MCF 10A (cell line): ENCODE measurements at regions of chr6 and their contacts with region 1.

Region 1: GRCh38 chr6:138088330-138088766 is 18.9 kb downstream of the PERP start:
- DNase-seq: peak; percentile 92
- H3K4me3 Mint-ChIP-seq: peak overlapping the region; percentile 62
- H3K27ac Mint-ChIP-seq: peak overlapping the region; percentile 97
- H3K4me1 Mint-ChIP-seq: peaks cover 34% of the 10 kb centered on the region
- H3K27me3 Mint-ChIP-seq: no peaks in the 10 kb centered on the region
- CTCF ChIP-seq: no peak

Region 2: GRCh38 chr6:137832110-137832509 is 256.2 kb before region 1 on chr6:
- CTCF ChIA-PET with region 1: no interaction called
- POLR2A ChIA-PET with region 1: no interaction called
- intact Hi-C with region 1: no loop called
- DNase-seq: peak; percentile 76
- H3K4me3 Mint-ChIP-seq: peak overlapping the region; percentile 33
- H3K27ac Mint-ChIP-seq: peak overlapping the region; percentile 90
- H3K4me1 Mint-ChIP-seq: peaks cover 54% of the 10 kb centered on the region
- H3K27me3 Mint-ChIP-seq: no peaks in the 10 kb centered on the region
- CTCF ChIP-seq: no peak

Region 3: GRCh38 chr6:138001750-138002349 is 86.5 kb before region 1 on chr6:
- CTCF ChIA-PET with region 1: interaction called, 15 read pairs
- POLR2A ChIA-PET with region 1: interaction called, 61 read pairs
- intact Hi-C with region 1: no loop called
- DNase-seq: peak; percentile 65
- H3K4me3 Mint-ChIP-seq: no peak overlapping the region
- H3K27ac Mint-ChIP-seq: no peak overlapping the region
- H3K4me1 Mint-ChIP-seq: peaks cover 10% of the 10 kb centered on the region
- H3K27me3 Mint-ChIP-seq: no peaks in the 10 kb centered on the region
- CTCF ChIP-seq: peak; percentile 83

Region 4: DNA sequence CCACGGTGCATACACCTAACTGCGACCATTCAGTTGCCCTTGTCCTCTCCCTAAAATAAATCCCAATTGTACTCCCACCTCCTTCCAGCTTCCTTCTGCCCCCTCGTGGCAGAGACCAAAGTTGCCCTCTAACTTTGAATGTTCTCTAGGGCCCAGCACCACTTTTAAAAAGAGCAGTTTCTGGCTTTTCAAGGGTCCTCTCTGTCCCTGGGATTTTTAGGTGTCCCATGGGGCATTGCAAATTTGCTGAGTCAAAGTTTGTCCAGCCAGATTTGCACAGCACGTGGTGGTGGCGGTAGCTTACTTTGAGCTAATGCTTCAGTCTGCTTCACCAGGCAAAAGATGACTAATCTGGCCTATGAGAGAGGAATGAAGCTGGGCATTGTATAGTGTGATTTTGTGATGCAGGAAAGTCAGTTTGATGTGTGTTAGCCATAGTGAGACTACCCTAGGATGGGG is 81.3 kb before region 1 on chr6:
- CTCF ChIA-PET with region 1: interaction called, 15 read pairs
- POLR2A ChIA-PET with region 1: interaction called, 61 read pairs
- intact Hi-C with region 1: no loop called
- DNase-seq: peak; percentile 69
- H3K4me3 Mint-ChIP-seq: no peak overlapping the region
- H3K27ac Mint-ChIP-seq: peak overlapping the region; percentile 47
- H3K4me1 Mint-ChIP-seq: peaks cover 17% of the 10 kb centered on the region
- H3K27me3 Mint-ChIP-seq: no peaks in the 10 kb centered on the region
- CTCF ChIP-seq: peak; percentile 49

Region 5: DNA sequence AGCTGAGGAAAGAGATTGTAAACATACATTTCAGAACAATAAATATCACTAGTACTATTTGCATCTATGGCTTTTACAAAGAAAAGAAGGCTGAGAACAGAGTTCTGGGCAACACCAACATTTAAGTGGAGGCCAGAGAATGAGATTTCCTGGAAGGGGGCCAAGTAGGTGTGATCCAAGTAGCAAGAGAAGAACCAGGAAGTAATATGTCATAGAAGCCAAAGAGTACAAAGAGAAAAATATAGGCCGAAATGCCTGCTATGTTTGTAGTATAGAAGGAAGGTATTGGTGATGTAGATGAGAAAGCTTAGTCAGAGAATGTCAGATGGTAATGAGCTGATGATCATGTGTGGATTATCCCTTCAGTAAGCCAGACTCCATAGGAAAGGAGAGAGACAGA is 75.7 kb before region 1 on chr6:
- CTCF ChIA-PET with region 1: interaction called, 6 read pairs
- POLR2A ChIA-PET with region 1: interaction called, 61 read pairs
- intact Hi-C with region 1: no loop called
- DNase-seq: no peak
- H3K4me3 Mint-ChIP-seq: no peak overlapping the region
- H3K27ac Mint-ChIP-seq: no peak overlapping the region
- H3K4me1 Mint-ChIP-seq: no peaks in the 10 kb centered on the region
- H3K27me3 Mint-ChIP-seq: no peaks in the 10 kb centered on the region
- CTCF ChIP-seq: no peak

Region 6: DNA sequence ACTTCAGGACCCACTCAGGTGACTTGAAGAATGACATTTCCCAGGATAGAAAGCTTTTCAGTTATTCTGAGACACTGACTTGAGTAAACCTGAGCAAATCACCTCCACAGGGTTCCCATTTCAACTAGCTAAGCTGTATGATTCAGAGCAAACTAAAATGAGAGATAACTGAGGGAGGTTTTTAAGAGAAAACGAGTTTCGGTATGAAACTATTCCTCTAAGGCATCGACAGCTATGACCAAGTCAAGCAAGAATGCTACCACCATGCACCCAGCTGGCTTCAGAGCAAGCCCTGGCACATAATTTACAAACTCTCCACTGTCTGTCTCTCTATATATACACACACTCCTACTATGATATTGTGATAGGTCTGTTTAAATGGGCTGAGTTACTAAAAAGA is 56.5 kb before region 1 on chr6:
- CTCF ChIA-PET with region 1: interaction called, 16 read pairs
- POLR2A ChIA-PET with region 1: interaction called, 506 read pairs
- intact Hi-C with region 1: loop called (anchors 1 kb)
- DNase-seq: peak; percentile 62
- H3K4me3 Mint-ChIP-seq: peak overlapping the region; percentile 55
- H3K27ac Mint-ChIP-seq: peak overlapping the region; percentile 91
- H3K4me1 Mint-ChIP-seq: peaks cover 62% of the 10 kb centered on the region
- H3K27me3 Mint-ChIP-seq: no peaks in the 10 kb centered on the region
- CTCF ChIP-seq: no peak

Region 7: GRCh38 chr6:138099832-138100231 is 11.5 kb after region 1 on chr6:
- CTCF ChIA-PET with region 1: interaction called, 10 read pairs
- POLR2A ChIA-PET with region 1: interaction called, 505 read pairs
- intact Hi-C with region 1: no loop called
- DNase-seq: peak; percentile 76
- H3K4me3 Mint-ChIP-seq: peak overlapping the region; percentile 37
- H3K27ac Mint-ChIP-seq: peak overlapping the region; percentile 81
- H3K4me1 Mint-ChIP-seq: peaks cover 40% of the 10 kb centered on the region
- H3K27me3 Mint-ChIP-seq: no peaks in the 10 kb centered on the region
- CTCF ChIP-seq: no peak

Region 8: DNA sequence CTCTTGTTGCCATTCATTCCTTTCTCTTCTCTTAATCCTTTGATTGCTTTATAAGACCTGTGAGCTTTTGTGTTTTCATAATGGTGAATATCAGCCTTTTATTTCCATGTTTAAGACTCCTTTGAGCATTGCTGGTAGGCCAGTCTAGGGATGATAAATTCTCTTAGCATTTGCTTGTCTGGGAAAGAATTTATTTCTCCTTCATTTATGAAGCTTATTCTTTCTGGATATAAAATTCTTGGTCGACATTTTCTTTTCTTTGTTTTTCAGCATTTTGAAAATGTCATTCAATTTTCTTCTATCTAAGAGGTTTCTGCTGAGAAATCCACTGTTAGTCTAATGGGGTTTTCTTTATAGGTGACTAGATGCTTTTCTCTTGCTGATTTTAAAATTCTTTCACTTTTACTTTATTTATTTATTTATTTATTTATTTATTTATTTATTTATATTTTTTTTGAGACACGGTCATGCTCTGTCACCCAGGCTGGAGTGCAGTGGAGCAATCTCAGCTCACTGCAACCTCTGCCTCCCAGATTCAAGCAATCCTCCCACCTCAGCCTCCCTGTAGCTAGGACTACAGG is 88.4 kb after region 1 on chr6:
- CTCF ChIA-PET with region 1: no interaction called
- POLR2A ChIA-PET with region 1: no interaction called
- intact Hi-C with region 1: no loop called
- DNase-seq: no peak
- H3K4me3 Mint-ChIP-seq: no peak overlapping the region
- H3K27ac Mint-ChIP-seq: no peak overlapping the region
- H3K4me1 Mint-ChIP-seq: no peaks in the 10 kb centered on the region
- H3K27me3 Mint-ChIP-seq: peaks cover 8% of the 10 kb centered on the region
- CTCF ChIP-seq: no peak

Region 9: DNA sequence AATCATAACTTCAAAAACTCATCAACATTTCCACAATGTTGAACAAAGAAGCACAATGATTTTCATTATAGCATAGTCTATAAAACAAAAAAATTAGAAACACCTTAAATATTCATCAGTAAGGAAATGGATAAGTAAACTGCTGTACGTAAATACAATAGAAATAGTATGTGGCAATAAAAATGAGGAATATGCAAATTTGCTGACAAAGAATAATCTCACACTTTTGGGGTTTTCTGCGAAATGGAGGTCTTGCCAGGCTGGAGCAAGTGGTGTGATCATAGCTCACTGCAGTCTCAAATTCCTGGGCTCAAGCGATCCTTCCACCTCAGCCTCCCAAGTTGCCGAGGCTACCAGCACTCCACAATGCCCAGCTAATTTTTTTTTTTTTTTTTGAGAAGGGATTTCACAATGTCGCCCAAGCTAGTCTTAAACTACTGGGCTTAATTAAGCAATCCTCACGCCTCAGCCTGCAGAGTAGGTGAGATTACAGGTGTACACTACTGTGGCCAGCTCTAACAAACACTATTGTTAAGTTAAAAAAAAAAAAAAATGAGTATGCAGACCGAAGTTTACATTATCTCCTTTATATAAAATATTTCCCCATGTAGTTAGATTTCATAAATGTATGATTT is 230.5 kb after region 1 on chr6:
- CTCF ChIA-PET with region 1: no interaction called
- POLR2A ChIA-PET with region 1: no interaction called
- intact Hi-C with region 1: no loop called
- DNase-seq: peak; percentile 30
- H3K4me3 Mint-ChIP-seq: no peak overlapping the region
- H3K27ac Mint-ChIP-seq: no peak overlapping the region
- H3K4me1 Mint-ChIP-seq: no peaks in the 10 kb centered on the region
- H3K27me3 Mint-ChIP-seq: no peaks in the 10 kb centered on the region
- CTCF ChIP-seq: no peak